ENCODE measurements at regions of chr17 and their contacts with region 1.

Region 1: DNA sequence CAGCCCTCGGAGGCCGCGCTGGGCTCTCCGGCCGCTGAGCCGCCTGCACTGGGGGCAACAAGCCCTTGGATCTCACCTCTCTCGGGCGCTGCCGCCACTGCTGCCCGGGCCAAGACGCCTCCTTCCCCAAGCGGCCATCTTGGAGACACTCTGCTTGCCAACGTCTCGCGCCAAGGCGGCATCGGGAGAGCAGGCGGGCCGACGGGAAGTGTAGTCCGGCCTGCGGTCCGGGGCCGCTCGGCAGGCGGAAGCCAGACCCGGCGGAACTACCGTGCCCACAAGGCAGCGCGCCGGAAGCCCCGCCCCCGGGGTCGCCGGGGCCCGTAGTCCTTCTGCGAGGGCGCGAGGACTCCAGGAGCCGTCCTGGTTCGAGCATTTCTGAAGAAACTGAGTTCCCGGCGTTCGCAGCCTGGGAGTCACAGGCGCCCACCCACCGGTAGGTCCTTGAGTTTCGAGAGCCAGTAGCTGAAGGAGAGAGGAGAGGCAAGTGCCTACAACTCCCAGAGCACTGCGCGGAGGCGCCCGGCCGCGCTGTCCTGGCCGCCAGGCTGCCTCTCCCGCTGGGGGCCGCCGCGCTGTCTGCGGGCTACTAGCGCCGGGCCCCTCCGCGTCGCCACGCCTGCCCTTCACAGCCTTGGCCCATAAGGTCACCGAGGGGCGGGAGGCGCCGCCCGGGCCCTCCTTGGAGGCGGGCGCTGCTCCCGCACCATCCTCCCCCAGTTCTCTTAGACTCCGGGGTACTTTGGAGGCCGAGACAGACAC is at the start of gene TMEM11:
- DNase-seq: peak; percentile 99
- ATAC-seq: peak; percentile 96
- total RNA-seq, gene TMEM11: 35.3 TPM

Region 2: DNA sequence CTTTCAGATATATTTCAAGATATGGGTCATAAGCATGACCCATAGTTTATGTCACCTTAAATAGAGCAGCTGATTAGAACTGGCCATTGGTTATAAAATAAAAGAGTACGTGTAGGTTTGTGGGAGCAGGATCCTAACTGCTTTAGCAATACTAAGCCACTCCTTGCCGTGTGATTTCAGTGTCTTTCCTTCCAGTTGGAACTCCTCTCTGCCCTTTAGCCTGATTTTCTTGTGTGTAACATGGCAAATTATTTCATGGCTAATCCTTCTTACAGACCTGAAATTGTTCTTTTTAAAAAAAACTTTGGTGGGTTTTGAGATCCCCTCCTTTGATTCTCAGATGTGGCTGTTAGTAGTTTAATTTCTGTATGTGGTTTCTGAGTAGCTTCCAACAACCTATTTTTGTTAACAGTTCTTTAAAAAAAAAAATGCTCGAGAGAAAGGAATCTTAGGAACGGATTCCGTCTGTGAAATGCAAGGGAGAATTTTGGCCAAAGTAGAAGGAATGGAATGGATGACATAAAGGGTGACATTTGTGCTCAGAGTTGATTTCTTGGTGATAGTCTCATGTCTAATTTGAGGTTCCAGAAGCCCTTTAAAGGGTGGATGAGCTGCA is 47.5 kb before region 1 on chr17:
- intact Hi-C with region 1: loop called (anchors 2 kb)
- DNase-seq: no peak
- ATAC-seq: peak; percentile 42

Measured in Right ventricle myocardium inferior (tissue), 1 donor.